Dorsolateral prefrontal cortex (tissue), 120 donors: ENCODE measurements at regions of chr4 and their contacts with region 1.

Region 1: GRCh38 chr4:151276787-151277562 is at the start of gene PRSS48:
- DNase-seq: peak; percentile 26 to 89 (median 78)
- H3K4me3 ChIP-seq: peak within 1 kb of the TSS in 2 of 59 donors; percentile 17 to 30
- H3K27ac ChIP-seq: peak within 1 kb of the TSS in 14 of 59 donors; percentile 2 to 71 (median 42)
- H3K27me3 ChIP-seq: no peaks in the 10 kb centered on the region
- CTCF ChIP-seq: peak; percentile 37 to 93 (median 83)
- total RNA-seq, gene PRSS48: 1.0 TPM in 1 of 120 experiments, not detected in the others

Region 2: DNA sequence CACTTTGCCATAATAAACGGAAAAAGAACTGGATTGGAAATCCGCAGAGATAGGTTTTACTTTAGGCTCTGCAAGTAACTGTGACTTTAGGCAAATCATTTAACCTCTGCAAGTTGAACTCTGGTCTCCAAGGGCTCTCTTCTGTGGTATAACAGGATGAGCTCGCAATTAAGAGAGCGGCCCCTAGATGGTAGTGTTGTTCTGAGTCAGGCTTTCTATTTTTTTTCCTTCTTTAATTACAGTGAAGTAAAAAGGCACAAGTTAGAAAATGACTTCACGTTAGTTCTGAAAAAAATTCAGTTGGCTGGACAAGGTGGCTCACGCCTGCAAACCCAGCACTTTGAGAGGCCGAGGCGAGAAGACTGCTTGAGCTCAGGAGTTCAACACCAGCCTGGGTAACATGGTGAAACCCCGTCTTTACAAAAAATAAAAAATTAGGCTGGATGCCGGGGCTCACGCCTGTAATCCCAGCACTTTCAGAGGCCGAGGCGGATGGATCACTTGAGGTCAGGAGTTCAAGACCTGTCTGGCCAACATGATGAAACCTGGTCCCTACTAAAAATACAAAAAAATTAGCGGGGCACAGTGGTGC is 159.5 kb before region 1 on chr4:
- intact Hi-C with region 1: loop called in 1 of 2 experiments (anchors 10 kb)
- DNase-seq: peak in 7 of 10 donors; percentile 31 to 69 (median 46)
- H3K4me3 ChIP-seq: no peak overlapping the region
- H3K27ac ChIP-seq: peak overlapping the region in 23 of 59 donors; percentile 4 to 73 (median 38)
- H3K27me3 ChIP-seq: no peaks in the 10 kb centered on the region
- CTCF ChIP-seq: peak; percentile 48 to 87 (median 77)

Region 3: DNA sequence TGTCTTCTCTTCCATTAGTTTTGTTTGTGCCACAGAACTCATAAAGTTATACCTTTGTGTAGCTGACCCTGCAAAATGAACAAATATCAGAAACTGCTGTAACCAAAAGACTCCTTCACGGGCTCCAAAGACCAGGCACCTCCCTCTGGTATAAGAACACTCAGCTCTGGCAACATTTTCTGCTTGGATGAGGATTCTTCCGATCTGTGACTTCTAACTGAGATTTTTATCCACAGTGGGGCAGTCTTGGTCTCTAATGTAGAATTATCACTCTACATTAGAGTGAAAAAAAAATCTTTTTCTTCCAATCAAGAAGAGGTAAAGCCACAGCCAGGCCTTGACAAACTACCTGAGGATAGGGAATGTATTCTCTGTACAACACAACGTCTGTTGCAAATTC is 38.5 kb before region 1 on chr4:
- intact Hi-C with region 1: loop called in 1 of 2 experiments (anchors 5 kb)
- DNase-seq: no peak
- H3K4me3 ChIP-seq: no peak overlapping the region
- H3K27ac ChIP-seq: peak overlapping the region in 44 of 59 donors; percentile 1 to 70 (median 48)
- H3K27me3 ChIP-seq: no peaks in the 10 kb centered on the region
- CTCF ChIP-seq: peak in 55 of 56 donors; percentile 14 to 71 (median 54)